ENCODE measurements at regions of chr12 and their contacts with region 1.

Region 1: DNA sequence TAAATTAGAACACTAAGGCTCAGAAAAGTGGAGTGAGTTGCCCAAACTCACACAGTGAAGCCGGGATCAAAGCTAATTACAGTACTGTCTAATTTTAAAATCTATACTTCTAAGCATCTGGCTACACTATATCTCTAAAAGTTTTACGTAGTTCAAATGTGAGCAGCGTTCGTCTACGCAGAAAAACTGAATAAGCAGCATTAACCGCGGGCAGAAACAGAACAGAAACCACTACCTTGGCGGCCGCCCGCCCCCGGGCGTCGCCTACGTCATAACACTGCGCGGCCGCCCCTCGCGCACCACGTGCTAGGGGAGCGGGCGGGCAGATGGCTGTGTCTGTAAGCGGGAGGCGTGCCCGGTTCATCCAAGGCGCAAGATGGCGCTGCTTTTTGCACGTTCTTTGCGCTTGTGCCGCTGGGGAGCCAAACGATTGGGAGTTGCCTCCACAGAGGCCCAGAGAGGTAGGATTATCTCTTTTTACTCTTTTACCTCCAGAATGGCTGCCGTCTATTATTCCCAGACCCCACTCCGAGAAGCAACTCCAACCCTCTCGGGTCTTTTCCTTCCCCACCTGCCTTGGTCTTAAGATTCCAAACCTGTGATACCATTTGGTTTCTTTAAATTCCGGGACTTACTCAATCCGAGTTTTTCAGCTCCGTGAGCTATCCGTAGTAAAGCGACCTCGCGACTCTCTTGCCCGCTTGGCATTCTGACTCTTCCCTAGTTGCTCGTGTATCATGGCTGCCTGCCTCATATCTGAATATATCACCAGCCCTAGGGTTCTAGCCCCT is at the start of gene SPRYD4:
- DNase-seq: peak; percentile 95
- H3K4me3 Mint-ChIP-seq: peak within 1 kb of the TSS; percentile 89
- H3K27ac Mint-ChIP-seq: peak within 1 kb of the TSS; percentile 98
- H3K4me1 Mint-ChIP-seq: peaks cover 35% of the 10 kb centered on the region
- H3K27me3 Mint-ChIP-seq: peaks cover 4% of the 10 kb centered on the region

Region 2: DNA sequence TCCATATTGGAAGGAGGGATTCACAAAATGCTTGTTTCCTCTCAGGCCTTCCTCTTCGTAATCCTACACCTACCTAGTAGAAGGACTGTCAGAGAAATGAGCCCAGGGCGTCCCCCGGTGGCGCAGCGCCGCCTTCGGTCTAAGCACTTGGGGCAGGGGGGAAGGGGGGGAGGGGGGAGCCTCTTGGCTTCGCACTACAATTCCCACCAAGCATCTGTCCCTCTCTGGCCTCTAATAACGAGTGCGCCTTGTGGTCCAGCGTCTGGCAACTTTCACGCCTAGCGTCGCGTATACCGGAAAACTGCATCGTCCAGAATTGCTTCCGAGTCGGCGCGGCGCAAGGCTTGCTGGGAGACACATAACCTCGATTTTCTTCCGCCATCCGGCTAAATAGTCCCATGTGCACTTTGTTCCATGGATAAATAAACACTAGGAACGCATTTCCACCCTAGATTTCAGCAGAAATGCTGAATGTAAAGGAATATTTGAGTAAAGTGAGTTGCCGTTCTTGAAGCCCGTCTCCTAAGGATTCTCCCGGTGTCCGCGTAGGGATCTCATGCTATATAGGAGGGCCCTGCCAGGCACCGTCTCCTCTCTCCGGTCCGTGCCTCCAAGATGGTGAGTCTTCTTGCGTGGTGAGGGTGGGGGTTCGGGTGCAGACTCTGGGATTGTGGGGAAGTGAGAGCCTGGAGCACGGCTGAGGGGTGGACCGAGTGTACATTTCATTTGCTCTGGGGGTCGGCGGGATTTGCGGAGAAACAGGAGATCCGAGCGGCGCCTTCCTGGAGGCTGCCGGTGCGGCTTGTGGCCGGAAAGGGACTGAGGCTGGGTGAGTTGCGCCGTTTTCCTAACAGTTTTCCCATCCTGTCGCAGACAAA is 426.6 kb before region 1 on chr12 and contains the start of gene RPS26:
- CTCF ChIA-PET with region 1: no interaction called
- DNase-seq: peak; percentile 95
- H3K4me3 Mint-ChIP-seq: peak within 1 kb of the TSS; percentile 92
- H3K27ac Mint-ChIP-seq: peak within 1 kb of the TSS; percentile 91
- H3K4me1 Mint-ChIP-seq: peaks cover 54% of the 10 kb centered on the region
- H3K27me3 Mint-ChIP-seq: peaks cover 3% of the 10 kb centered on the region

Region 3: DNA sequence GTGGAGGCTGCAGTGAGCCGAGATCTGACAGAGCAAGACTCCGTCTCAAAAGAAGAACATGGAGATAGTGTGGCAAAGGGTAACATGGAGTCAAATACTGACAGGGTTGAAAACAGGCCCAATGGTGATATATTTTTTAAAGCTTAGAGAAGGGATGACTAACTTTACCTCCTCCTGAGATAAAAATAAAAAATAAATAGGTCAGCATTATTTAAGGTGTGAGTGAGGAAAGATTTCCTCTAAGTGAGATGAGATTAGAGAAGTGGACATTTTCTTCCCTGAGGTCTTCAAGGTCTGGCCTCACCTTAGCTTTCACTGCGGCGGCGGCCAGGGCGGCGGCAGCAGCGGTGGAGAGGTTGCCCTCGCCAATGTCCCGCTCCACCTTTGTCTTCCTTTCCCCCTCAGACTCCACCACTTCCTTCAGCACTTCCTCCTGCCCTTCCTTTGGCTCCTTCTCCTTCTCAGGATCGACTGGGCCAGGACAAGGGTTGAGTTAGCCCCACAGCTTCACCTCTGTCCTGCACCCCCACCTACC is 299.1 kb before region 1 on chr12:
- CTCF ChIA-PET with region 1: no interaction called
- DNase-seq: no peak
- H3K4me3 Mint-ChIP-seq: no peak overlapping the region
- H3K27ac Mint-ChIP-seq: no peak overlapping the region
- H3K4me1 Mint-ChIP-seq: no peaks in the 10 kb centered on the region
- H3K27me3 Mint-ChIP-seq: no peaks in the 10 kb centered on the region

Region 4: GRCh38 chr12:56206457-56207166 is 261.8 kb before region 1 on chr12:
- CTCF ChIA-PET with region 1: interaction called, 15 read pairs
- DNase-seq: peak; percentile 65
- H3K4me3 Mint-ChIP-seq: no peak overlapping the region
- H3K27ac Mint-ChIP-seq: no peak overlapping the region
- H3K4me1 Mint-ChIP-seq: no peaks in the 10 kb centered on the region
- H3K27me3 Mint-ChIP-seq: no peaks in the 10 kb centered on the region

Region 5: DNA sequence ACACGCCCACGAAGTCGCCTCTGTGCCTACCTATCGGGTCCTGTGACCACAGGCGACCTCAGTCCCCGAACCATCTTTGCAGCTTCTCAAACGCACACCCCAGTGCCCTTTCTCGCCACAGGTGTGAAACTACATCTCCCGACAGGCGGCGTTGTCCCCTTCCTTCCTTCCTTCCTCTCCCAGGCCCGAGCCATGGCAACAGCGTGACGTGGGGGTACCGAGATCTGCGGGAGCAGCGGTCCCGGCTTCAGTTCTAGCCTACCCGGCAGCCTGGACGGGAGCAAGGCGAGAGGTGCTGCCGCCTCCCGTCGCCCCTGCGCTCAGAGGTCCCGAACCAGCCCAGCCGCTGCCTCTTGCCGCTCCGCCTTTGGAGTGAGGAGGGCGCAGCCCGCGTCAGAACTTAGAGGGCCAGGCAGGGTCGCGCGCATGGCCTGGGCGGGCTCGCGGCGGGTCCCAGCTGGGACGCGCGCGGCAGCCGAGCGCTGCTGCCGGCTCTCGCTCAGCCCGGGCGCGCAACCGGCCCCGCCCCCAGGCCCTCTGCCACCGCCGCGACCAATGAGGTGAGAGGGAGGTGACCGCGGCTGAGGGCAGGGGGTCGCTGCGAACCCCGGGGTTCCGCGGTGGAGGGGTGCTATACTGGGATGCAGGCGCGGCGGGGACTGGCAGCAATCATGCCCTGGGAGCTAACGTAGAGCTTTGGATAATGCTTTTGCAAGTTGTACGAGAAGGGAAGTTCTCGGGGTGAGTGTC is 201.5 kb before region 1 on chr12 and contains the start of gene COQ10A:
- CTCF ChIA-PET with region 1: interaction called, 11 read pairs
- DNase-seq: peak; percentile 94
- H3K4me3 Mint-ChIP-seq: peak within 1 kb of the TSS; percentile 95
- H3K27ac Mint-ChIP-seq: peak within 1 kb of the TSS; percentile 91
- H3K4me1 Mint-ChIP-seq: peaks cover 22% of the 10 kb centered on the region
- H3K27me3 Mint-ChIP-seq: no peaks in the 10 kb centered on the region

Region 6: DNA sequence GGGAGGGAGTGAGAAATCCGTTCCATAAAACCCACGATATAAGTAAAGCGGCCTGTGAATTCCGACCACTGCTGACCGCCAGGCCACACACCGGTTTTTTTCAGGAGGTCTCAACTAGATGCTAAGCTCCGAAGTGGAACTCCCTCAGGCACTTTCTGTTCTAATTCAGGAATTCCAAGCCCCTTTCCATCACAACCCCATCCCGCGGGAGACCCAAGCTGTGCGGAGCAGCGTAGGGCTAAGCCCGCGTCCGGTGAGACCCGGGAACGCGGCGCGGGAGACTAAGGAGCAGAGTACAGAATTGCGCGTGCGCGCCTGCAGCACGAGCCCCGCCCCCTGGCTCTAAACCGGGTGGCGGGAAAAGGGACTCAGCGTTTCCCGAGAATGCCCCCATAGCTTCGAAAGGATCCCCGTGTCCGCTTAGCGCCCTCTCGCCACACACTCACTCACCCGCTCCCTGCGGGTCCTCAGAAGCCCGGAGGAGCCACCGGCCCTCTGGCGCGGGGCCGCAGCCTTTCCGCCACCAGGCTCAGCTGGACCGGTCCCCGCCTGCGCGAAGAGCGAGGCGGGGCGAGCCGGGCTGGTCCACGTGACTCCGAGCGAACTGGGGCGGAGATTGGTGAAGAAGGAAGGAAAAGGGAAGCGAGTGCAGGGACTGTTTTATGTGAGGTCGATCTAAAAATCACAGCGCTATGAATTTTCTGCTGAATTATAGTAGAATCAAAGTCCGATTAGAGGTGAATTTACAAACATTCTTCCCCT is 19.4 kb before region 1 on chr12 and contains the start of gene TIMELESS:
- CTCF ChIA-PET with region 1: interaction called, 11 read pairs
- DNase-seq: peak; percentile 90
- H3K4me3 Mint-ChIP-seq: peak within 1 kb of the TSS; percentile 84
- H3K27ac Mint-ChIP-seq: peak within 1 kb of the TSS; percentile 83
- H3K4me1 Mint-ChIP-seq: peaks cover 27% of the 10 kb centered on the region
- H3K27me3 Mint-ChIP-seq: peaks cover 13% of the 10 kb centered on the region

Region 7: GRCh38 chr12:56454557-56454956 is 13.9 kb before region 1 on chr12 and contains the start of gene MIP:
- CTCF ChIA-PET with region 1: interaction called, 11 read pairs
- DNase-seq: no peak
- H3K4me3 Mint-ChIP-seq: no peak within 1 kb of the TSS
- H3K27ac Mint-ChIP-seq: no peak within 1 kb of the TSS
- H3K4me1 Mint-ChIP-seq: peaks cover 5% of the 10 kb centered on the region
- H3K27me3 Mint-ChIP-seq: peaks cover 27% of the 10 kb centered on the region